ENCODE measurements at regions of chr5 and their contacts with region 1.

Region 1: GRCh38 chr5:33423018-33423630 is 17.6 kb upstream of the TARS1 start:
- DNase-seq: no peak
- ATAC-seq: peak; percentile 61
- H3K4me3 ChIP-seq: no peak overlapping the region
- H3K27ac ChIP-seq: no peak overlapping the region
- H3K4me1 ChIP-seq: no peaks in the 10 kb centered on the region
- H3K27me3 ChIP-seq: no peaks in the 10 kb centered on the region
- CTCF ChIP-seq: peak; percentile 26 to 51 (median 33); a peak in 4 of 6 replicates
- EP300 ChIP-seq: no peak
- POLR2A ChIP-seq: no peak
- RAD21 ChIP-seq: peak; percentile 57

Region 2: DNA sequence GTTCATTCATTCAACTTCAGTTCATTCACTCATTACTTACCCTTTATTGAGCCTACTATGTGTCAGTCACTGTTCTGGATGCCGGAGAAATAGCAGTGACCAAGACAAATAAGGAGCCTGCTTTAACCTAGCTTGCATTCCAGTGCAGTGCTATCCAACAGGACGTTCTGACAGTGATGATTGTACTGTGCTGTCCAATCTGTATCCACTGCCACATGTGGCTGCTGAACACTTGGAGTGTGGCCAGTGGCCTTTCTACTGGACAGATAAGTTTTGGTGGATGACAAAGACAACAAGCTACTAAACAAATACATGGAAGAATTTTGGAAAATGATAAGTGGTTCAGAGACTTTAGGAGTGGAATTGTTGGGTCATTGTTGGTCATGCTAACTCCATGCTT is 804.2 kb before region 1 on chr5:
- CTCF ChIA-PET with region 1: no interaction called
- POLR2A ChIA-PET with region 1: no interaction called
- RAD21 ChIA-PET with region 1: no interaction called
- SMC1A ChIA-PET with region 1: no interaction called
- in situ Hi-C with region 1: no loop called
- intact Hi-C with region 1: loop called (anchors 5 kb)
- DNase-seq: no peak
- ATAC-seq: no peak
- H3K4me3 ChIP-seq: no peak overlapping the region
- H3K27ac ChIP-seq: no peak overlapping the region
- H3K4me1 ChIP-seq: no peaks in the 10 kb centered on the region
- H3K27me3 ChIP-seq: no peaks in the 10 kb centered on the region
- CTCF ChIP-seq: no peak
- EP300 ChIP-seq: no peak
- POLR2A ChIP-seq: no peak
- RAD21 ChIP-seq: no peak

Measured in GM12878 (cell line).